HEK293T (cell line): ENCODE measurements at regions of chr17 and their contacts with region 1.

Region 1: GRCh38 chr17:39547713-39548478 is 59.8 kb downstream of the NEUROD2 start:
- DNase-seq: peak; percentile 70

Region 2: DNA sequence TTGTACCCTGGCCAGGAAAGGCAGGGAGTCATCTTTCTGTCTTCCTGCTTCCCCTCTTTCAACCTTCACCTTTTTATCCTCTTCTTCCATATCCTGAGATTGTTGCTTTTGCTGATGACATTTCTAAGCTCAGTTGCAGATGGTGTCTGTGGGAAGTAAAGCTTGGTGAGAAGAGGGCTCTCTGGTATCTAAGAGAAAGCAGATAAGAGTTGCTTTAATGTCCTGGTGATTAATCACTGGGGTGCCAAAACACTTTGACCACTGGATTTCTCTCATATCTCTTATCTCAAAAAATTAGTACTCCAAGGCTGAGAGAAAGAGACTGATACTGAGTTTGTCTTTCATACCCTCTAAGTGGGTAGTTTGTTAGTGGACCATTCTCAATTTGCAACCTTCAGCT is 11.4 kb before region 1 on chr17:
- CTCF ChIA-PET with region 1: interaction called, 10 read pairs
- POLR2A ChIA-PET with region 1: no interaction called
- DNase-seq: no peak

Region 3: GRCh38 chr17:39687811-39688518 is 140.1 kb after region 1 on chr17 and contains the start of gene PGAP3:
- CTCF ChIA-PET with region 1: no interaction called
- POLR2A ChIA-PET with region 1: no interaction called
- DNase-seq: peak; percentile 84